Calu3 (cell line): ENCODE measurements at regions of chr17 and their contacts with region 1.

Region 1: DNA sequence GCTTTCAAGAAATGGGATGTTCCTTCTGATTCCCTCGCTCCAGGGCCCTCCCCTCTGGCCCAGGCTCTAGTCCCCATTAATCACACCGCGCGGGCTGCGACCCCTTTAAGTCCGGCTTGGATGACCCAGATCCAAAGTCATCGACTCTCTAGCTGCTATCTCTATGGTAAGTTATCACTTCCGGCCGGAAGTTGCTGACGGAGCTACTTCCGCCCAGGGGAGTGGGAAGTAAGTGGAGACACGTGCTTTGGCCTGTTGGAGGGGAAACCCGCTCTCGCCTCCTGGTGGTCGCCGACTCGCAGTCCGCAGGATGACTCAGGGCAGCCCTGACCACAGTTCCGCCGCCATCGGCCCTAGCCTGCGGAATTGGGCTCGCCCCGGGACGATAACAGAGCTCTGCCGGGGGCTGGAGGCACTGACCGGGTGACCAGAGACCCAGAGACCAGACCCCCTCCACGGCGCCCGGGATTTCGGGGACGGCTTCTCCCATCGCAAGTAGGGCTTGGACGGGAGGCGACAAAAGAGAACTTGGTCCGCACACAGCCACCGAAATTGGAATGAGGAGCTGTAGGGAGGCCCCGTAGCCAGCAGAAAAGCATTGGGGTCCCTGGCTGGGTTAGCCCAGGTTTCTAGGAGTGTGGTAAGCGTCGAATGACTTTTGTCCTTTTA is 52.2 kb upstream of the SEC14L1 start:
- DNase-seq: peak; percentile 91
- H3K4me3 Mint-ChIP-seq: peak overlapping the region; percentile 95
- H3K27ac Mint-ChIP-seq: peak overlapping the region; percentile 99
- H3K4me1 Mint-ChIP-seq: peaks cover 35% of the 10 kb centered on the region
- H3K27me3 Mint-ChIP-seq: no peaks in the 10 kb centered on the region
- CTCF ChIP-seq: peak; percentile 76

Region 2: GRCh38 chr17:76623271-76624146 is 465.1 kb before region 1 on chr17:
- CTCF ChIA-PET with region 1: no interaction called
- intact Hi-C with region 1: no loop called
- DNase-seq: peak; percentile 87
- H3K4me3 Mint-ChIP-seq: peak overlapping the region; percentile 17
- H3K27ac Mint-ChIP-seq: peak overlapping the region; percentile 81
- H3K4me1 Mint-ChIP-seq: peaks cover 14% of the 10 kb centered on the region
- H3K27me3 Mint-ChIP-seq: no peaks in the 10 kb centered on the region
- CTCF ChIP-seq: peak; percentile 90

Region 3: GRCh38 chr17:77247048-77247541 is 158.5 kb after region 1 on chr17:
- CTCF ChIA-PET with region 1: interaction called, 3 read pairs
- intact Hi-C with region 1: loop called (anchors 2 kb)
- DNase-seq: peak; percentile 90
- H3K4me3 Mint-ChIP-seq: peak overlapping the region; percentile 61
- H3K27ac Mint-ChIP-seq: no peak overlapping the region
- H3K4me1 Mint-ChIP-seq: peaks cover 9% of the 10 kb centered on the region
- H3K27me3 Mint-ChIP-seq: peaks cover 19% of the 10 kb centered on the region
- CTCF ChIP-seq: peak; percentile 97

Region 4: GRCh38 chr17:77254951-77255825 is 166.6 kb after region 1 on chr17:
- CTCF ChIA-PET with region 1: interaction called, 16 read pairs
- intact Hi-C with region 1: no loop called
- DNase-seq: peak; percentile 96
- H3K4me3 Mint-ChIP-seq: peak overlapping the region; percentile 57
- H3K27ac Mint-ChIP-seq: peak overlapping the region; percentile 97
- H3K4me1 Mint-ChIP-seq: peaks cover 41% of the 10 kb centered on the region
- H3K27me3 Mint-ChIP-seq: no peaks in the 10 kb centered on the region
- CTCF ChIP-seq: no peak